ENCODE measurements at regions of chr19 and their contacts with region 1.

Region 1: DNA sequence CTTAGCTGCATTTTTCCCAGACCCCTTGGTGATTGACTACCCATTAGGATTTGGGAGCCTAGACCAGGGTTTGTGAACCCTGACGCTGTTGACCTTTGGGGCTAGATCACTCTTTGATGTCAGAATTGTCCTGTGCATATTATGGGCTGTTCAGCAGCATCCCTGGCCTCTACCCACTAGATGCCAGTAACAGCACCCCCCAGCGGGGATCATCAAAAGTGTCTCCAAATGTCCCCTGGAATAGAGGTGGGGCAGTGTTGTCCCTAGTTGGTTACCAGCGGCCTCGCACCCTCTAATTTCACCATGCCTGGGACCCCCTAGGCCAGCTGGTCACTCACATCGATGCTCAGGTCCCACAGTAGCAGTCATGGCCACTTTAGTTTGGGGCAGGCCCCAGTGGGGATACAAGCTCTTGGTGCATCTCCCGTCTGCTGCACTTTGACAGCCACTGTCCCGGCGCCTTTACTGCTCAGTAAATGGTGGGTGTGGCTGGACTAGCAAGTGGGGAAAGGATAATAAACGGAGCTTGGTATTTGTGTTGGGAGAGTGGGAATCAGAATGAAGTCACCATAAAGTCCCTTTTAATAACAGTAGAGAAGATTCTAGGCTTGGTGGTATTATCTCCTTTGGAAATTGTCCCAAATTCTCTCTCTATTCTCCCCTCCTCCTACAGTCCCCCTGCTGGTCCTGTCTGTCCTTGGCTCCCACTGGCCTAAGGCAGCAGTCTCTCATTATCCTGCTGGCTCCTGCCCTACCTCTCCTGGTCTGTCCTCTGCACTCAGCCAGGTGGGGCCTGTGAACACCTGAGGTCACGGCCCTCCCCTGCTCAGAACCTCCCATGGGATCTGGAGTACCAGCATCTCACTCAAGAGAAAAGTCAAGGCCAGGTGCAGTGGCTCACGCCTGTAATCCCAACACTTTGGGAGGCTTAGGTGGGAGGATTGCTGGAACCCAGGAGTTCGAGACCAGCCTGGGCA is 80.6 kb downstream of the SIPA1L3 start:
- DNase-seq: no peak
- ATAC-seq: peak; percentile 77
- H3K4me3 ChIP-seq: no peak overlapping the region
- H3K27ac ChIP-seq: peak overlapping the region; percentile 86
- H3K4me1 ChIP-seq: peaks cover 34% of the 10 kb centered on the region
- H3K27me3 ChIP-seq: no peaks in the 10 kb centered on the region
- CTCF ChIP-seq: peak; percentile 26 to 58 (median 39); a peak in 4 of 6 replicates
- EP300 ChIP-seq: no peak
- POLR2A ChIP-seq: no peak
- RAD21 ChIP-seq: peak; percentile 54

Region 2: GRCh38 chr19:37885392-37885791 is 102.3 kb before region 1 on chr19:
- CTCF ChIA-PET with region 1: no interaction called
- POLR2A ChIA-PET with region 1: no interaction called
- RAD21 ChIA-PET with region 1: no interaction called
- SMC1A ChIA-PET with region 1: no interaction called
- in situ Hi-C with region 1: no loop called
- intact Hi-C with region 1: no loop called
- DNase-seq: no peak
- ATAC-seq: no peak
- H3K4me3 ChIP-seq: no peak overlapping the region
- H3K27ac ChIP-seq: no peak overlapping the region
- H3K4me1 ChIP-seq: no peaks in the 10 kb centered on the region
- H3K27me3 ChIP-seq: no peaks in the 10 kb centered on the region
- CTCF ChIP-seq: no peak
- EP300 ChIP-seq: no peak
- POLR2A ChIP-seq: no peak
- RAD21 ChIP-seq: no peak

Region 3: DNA sequence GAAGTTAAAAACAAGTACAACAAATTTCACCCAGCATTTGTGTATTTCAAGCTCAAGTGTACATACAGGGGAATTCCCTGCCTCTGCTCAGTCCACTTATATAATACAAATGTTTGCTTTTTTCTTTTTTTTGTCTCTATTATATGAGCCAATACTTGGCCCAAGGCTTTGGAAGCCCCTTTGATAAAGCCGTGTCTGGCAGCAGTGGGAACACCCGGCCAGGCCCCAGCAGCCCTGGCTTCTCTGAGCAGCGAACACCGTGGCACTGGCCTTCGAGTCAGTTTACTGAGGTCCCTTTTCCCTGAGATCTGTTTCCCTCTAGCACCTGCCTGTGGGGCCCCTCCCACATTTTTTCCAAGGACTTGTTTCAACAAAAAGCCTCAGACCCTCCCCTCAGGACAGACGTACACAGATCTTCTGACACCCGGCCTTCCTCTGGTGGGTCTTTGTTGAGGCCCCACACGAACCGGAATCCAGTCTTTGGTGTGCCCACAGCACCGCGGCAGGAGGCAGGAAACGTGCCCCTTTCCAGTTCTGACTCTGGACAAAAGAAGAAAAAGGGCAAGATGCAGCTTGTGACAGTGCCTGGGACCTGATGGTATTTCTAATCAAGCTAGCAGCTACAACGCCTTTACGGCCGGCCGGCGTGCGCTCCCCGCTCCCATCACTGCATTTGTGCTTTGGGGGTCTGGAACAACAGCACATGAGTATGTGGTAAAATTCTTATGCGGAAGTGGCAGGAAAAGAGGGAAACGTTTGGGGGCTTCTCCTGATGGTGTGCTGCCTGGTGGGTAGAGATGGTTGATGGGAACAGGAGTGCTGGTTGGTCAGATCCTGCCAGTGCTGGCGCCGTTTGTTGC is 66.8 kb before region 1 on chr19:
- CTCF ChIA-PET with region 1: interaction called, 13 read pairs
- POLR2A ChIA-PET with region 1: interaction called, 3 read pairs
- RAD21 ChIA-PET with region 1: interaction called, 12 read pairs
- SMC1A ChIA-PET with region 1: interaction called, 15 read pairs
- in situ Hi-C with region 1: no loop called
- intact Hi-C with region 1: no loop called
- DNase-seq: no peak
- ATAC-seq: peak; percentile 37
- H3K4me3 ChIP-seq: peak overlapping the region; percentile 31; the same call in 1 of the 2 replicates
- H3K27ac ChIP-seq: peak overlapping the region; percentile 92
- H3K4me1 ChIP-seq: peaks cover 50% of the 10 kb centered on the region
- H3K27me3 ChIP-seq: no peaks in the 10 kb centered on the region
- CTCF ChIP-seq: no peak
- EP300 ChIP-seq: no peak
- POLR2A ChIP-seq: no peak
- RAD21 ChIP-seq: no peak

Region 4: DNA sequence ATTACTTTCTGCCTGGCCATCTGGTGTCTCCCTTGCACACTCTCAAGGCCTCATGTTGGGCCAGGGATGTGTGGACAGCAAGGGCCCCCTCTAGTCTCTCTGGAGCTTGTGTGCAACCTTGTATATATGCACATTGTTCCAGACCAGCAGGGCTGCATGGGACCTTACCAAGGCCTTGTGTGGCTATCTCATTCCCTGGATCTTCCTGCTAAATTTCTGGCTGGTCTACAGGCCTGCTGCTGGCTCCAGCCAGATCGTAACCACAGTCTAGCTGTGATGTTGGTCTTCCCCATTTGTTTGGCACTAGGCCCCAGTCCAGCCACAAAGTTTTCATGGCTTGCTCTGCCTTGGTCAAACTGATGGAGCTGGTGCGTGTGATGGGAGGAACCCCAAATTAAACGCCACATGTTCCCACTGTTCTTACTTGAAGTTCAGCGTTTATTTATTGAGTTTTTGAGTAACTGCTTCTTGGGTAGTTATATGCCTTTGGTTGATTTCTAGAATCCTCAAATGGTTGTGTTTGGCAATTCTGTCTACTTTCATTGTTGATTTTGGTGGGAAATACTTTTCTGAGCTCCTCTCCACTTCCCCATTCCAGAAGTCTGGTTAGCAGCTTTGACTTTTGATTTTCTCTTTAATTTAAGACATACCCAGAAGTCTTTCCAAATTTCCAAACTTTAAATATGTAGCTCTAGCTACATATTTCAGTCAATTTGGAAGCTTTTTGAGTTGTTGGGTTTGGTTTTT is 24.3 kb before region 1 on chr19:
- CTCF ChIA-PET with region 1: interaction called, 6 read pairs
- POLR2A ChIA-PET with region 1: interaction called, 5 read pairs
- RAD21 ChIA-PET with region 1: interaction called, 7 read pairs
- SMC1A ChIA-PET with region 1: interaction called, 23 read pairs
- in situ Hi-C with region 1: no loop called
- intact Hi-C with region 1: no loop called
- DNase-seq: no peak
- ATAC-seq: peak; percentile 59
- H3K4me3 ChIP-seq: no peak overlapping the region
- H3K27ac ChIP-seq: peak overlapping the region; percentile 45
- H3K4me1 ChIP-seq: peaks cover 45% of the 10 kb centered on the region
- H3K27me3 ChIP-seq: no peaks in the 10 kb centered on the region
- CTCF ChIP-seq: peak in 1 of 3 experiments; percentile 9; a peak in 1 of 6 replicates
- EP300 ChIP-seq: no peak
- POLR2A ChIP-seq: no peak
- RAD21 ChIP-seq: no peak

Region 5: DNA sequence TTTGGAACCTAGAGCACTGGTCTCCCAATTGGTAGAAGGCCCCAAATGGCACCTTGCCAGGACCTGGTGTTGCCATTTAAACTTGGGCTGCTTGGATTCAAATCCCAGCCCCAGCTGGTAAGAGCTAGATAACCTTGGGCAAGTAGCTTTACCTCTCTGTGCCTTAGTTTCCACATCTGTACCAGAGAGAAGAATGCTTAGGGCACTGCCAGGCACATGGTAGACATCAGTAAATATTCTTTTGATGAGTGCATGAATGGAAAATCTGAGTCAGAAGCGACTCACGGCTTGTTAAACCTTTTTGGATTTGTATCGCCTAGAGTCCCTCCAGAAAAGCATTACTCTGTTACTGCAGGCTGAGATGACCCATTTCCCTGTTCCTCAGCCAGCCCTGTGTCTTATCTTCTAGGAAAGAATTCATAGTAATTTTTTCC is 10.3 kb after region 1 on chr19:
- CTCF ChIA-PET with region 1: interaction called, 14 read pairs
- POLR2A ChIA-PET with region 1: interaction called, 27 read pairs
- RAD21 ChIA-PET with region 1: interaction called, 59 read pairs
- SMC1A ChIA-PET with region 1: interaction called, 47 read pairs
- in situ Hi-C with region 1: no loop called
- intact Hi-C with region 1: no loop called
- DNase-seq: no peak
- ATAC-seq: no peak; the same call in 1 of the 3 replicates
- H3K4me3 ChIP-seq: no peak overlapping the region
- H3K27ac ChIP-seq: no peak overlapping the region
- H3K4me1 ChIP-seq: peaks cover 7% of the 10 kb centered on the region
- H3K27me3 ChIP-seq: no peaks in the 10 kb centered on the region
- CTCF ChIP-seq: no peak
- EP300 ChIP-seq: no peak
- POLR2A ChIP-seq: no peak
- RAD21 ChIP-seq: no peak

Region 6: GRCh38 chr19:38033658-38034498 is 46.2 kb after region 1 on chr19:
- CTCF ChIA-PET with region 1: interaction called, 10 read pairs
- POLR2A ChIA-PET with region 1: no interaction called
- RAD21 ChIA-PET with region 1: interaction called, 5 read pairs
- SMC1A ChIA-PET with region 1: interaction called, 3 read pairs
- in situ Hi-C with region 1: no loop called
- intact Hi-C with region 1: no loop called
- DNase-seq: peak; percentile 81
- ATAC-seq: peak; percentile 94
- H3K4me3 ChIP-seq: peak overlapping the region; percentile 11
- H3K27ac ChIP-seq: peak overlapping the region; percentile 69
- H3K4me1 ChIP-seq: peaks cover 39% of the 10 kb centered on the region
- H3K27me3 ChIP-seq: no peaks in the 10 kb centered on the region
- CTCF ChIP-seq: peak; percentile 21 to 51 (median 44); a peak in 4 of 6 replicates
- EP300 ChIP-seq: peak; percentile 40 to 59; a peak in 2 of 4 replicates
- POLR2A ChIP-seq: no peak
- RAD21 ChIP-seq: peak; percentile 35; the same call in 1 of the 2 replicates

Region 7: DNA sequence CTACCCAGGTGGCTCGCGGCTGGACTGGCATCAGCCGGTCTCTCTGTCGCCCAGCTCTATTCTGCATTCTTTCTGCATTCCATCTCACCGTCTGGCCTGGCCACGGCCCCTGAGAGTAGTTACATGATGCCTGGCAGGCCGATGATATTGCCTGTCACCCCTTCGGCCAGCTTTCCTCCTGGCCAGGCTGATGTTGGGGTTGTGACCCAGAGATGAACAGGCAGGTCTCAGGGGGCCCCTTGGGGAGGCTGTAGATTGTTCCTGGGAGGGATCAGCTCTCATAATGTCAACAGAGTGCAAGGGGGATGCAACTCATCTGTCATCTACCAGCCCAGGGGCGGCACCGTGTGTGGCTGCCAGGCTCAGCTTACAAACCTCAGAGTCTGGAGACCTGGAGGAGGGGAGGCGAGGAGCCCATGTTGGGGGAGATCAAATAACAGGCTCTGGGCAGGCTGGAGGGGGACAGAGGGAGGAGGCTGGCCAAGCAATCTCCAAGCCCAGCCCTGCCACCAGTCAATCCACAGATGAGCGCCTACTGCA is 1001.5 kb after region 1 on chr19:
- CTCF ChIA-PET with region 1: no interaction called
- POLR2A ChIA-PET with region 1: no interaction called
- RAD21 ChIA-PET with region 1: no interaction called
- SMC1A ChIA-PET with region 1: no interaction called
- in situ Hi-C with region 1: no loop called
- intact Hi-C with region 1: no loop called
- DNase-seq: no peak
- ATAC-seq: peak; percentile 45; the same call in 2 of the 3 replicates
- H3K4me3 ChIP-seq: no peak overlapping the region
- H3K27ac ChIP-seq: no peak overlapping the region
- H3K4me1 ChIP-seq: peaks cover 3% of the 10 kb centered on the region; the same call in 1 of the 2 replicates
- H3K27me3 ChIP-seq: no peaks in the 10 kb centered on the region
- CTCF ChIP-seq: no peak
- EP300 ChIP-seq: no peak
- POLR2A ChIP-seq: no peak
- RAD21 ChIP-seq: no peak